ENCODE measurements at regions of chr2 and their contacts with region 1.

Region 1: DNA sequence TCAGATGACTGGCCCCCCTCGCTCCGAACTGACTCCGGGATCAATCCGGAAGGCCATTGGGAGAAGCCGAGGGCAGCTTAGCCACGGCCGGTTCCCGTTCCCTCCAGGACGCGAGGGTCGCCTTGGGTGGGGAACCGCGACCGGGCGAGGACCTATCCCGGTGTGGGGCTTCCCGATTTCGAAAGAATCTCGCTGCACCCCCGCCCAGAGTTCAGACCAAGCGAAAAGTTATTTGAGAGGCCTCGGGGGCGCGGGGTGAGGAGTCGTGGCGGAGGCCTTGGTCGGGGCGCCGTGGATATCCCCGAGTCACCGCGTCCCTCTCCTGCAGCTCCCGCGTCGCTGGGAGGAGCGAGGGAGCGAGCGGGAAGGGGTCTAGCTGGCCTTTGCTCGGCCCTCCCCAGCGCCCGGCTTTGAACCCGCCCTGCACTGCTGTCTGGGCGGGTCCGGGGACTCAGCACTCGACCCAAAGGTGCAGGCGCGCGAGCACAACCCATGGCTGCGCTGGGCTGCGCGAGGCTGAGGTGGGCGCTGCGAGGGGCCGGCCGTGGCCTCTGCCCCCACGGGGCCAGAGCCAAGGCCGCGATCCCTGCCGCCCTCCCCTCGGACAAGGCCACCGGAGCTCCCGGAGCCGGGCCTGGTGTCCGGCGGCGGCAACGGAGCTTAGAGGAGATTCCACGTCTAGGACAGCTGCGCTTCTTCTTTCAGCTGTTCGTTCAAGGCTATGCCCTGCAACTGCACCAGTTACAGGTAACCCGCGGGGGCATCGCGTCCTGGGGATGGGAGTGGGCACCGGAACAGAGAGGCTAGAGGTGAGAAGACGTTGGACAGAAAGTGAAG is at the start of gene CYP27A1:
- DNase-seq: peak; percentile 78
- ATAC-seq: peak; percentile 92
- total RNA-seq, gene CYP27A1: 12.5 TPM

Region 2: GRCh38 chr2:218710687-218711549 is 71.0 kb before region 1 on chr2 and contains the start of gene TTLL4:
- intact Hi-C with region 1: loop called (anchors 5 kb)
- DNase-seq: peak; percentile 100
- ATAC-seq: peak; percentile 99
- total RNA-seq, gene TTLL4: 8.4 TPM

Measured in Right ventricle myocardium inferior (tissue), 1 donor.